Activated T-helper 1 cell treated with anti-CD3 and anti-CD28 coated beads, Interleukin-12 subunit alpha, Interleukin-12 subunit beta, Interleukin-2, Interleukin-4 antibody, amounts not matched to agents 30 ng/mL and 10 ng/mL and 1 ng/mL, durations not matched to agents 14 hours and 24 hours and 36 hours (primary cell): ENCODE measurements at regions of chr20 and their contacts with region 1.

Region 1: GRCh38 chr20:62793912-62794724 is 2.2 kb upstream of the MRGBP start:
- DNase-seq: peak; percentile 96
- H3K4me3 Mint-ChIP-seq: peak overlapping the region; percentile 81
- H3K27ac Mint-ChIP-seq: peak overlapping the region; percentile 91
- H3K4me1 Mint-ChIP-seq: peaks cover 15% of the 10 kb centered on the region
- H3K27me3 Mint-ChIP-seq: peaks cover 9% of the 10 kb centered on the region

Region 2: GRCh38 chr20:62121776-62122631 is 672.1 kb before region 1 on chr20 and contains the start of gene LSM14B:
- intact Hi-C with region 1: loop called (anchors 2 kb)
- DNase-seq: peak; percentile 95
- H3K4me3 Mint-ChIP-seq: peak within 1 kb of the TSS; percentile 90
- H3K27ac Mint-ChIP-seq: peak within 1 kb of the TSS; percentile 94
- H3K4me1 Mint-ChIP-seq: peaks cover 32% of the 10 kb centered on the region
- H3K27me3 Mint-ChIP-seq: no peaks in the 10 kb centered on the region
- total RNA-seq, gene LSM14B: 39.6 and 43.2 TPM in 2 replicates

Region 3: GRCh38 chr20:62407221-62407992 is 386.7 kb before region 1 on chr20 and contains the start of gene CABLES2:
- intact Hi-C with region 1: loop called (anchors 2 kb)
- DNase-seq: peak; percentile 90
- H3K4me3 Mint-ChIP-seq: peak within 1 kb of the TSS; percentile 85
- H3K27ac Mint-ChIP-seq: peak within 1 kb of the TSS; percentile 87
- H3K4me1 Mint-ChIP-seq: peaks cover 10% of the 10 kb centered on the region
- H3K27me3 Mint-ChIP-seq: no peaks in the 10 kb centered on the region
- total RNA-seq, gene CABLES2: 12.9 and 15.7 TPM in 2 replicates

Region 4: GRCh38 chr20:62642040-62642665 is 152.0 kb before region 1 on chr20 and contains the start of gene SLCO4A1:
- intact Hi-C with region 1: loop called (anchors 1 kb)
- DNase-seq: peak; percentile 90
- H3K4me3 Mint-ChIP-seq: peak within 1 kb of the TSS; percentile 85
- H3K27ac Mint-ChIP-seq: peak within 1 kb of the TSS; percentile 78
- H3K4me1 Mint-ChIP-seq: peaks cover 16% of the 10 kb centered on the region
- H3K27me3 Mint-ChIP-seq: peaks cover 16% of the 10 kb centered on the region
- total RNA-seq, gene SLCO4A1: 47.6 and 49.8 TPM in 2 replicates

Region 5: GRCh38 chr20:62723351-62723750 is 70.8 kb before region 1 on chr20:
- intact Hi-C with region 1: loop called (anchors 5 kb)
- DNase-seq: no peak
- H3K4me3 Mint-ChIP-seq: no peak overlapping the region
- H3K27ac Mint-ChIP-seq: no peak overlapping the region
- H3K4me1 Mint-ChIP-seq: peaks cover 12% of the 10 kb centered on the region
- H3K27me3 Mint-ChIP-seq: peaks cover 33% of the 10 kb centered on the region

Region 6: DNA sequence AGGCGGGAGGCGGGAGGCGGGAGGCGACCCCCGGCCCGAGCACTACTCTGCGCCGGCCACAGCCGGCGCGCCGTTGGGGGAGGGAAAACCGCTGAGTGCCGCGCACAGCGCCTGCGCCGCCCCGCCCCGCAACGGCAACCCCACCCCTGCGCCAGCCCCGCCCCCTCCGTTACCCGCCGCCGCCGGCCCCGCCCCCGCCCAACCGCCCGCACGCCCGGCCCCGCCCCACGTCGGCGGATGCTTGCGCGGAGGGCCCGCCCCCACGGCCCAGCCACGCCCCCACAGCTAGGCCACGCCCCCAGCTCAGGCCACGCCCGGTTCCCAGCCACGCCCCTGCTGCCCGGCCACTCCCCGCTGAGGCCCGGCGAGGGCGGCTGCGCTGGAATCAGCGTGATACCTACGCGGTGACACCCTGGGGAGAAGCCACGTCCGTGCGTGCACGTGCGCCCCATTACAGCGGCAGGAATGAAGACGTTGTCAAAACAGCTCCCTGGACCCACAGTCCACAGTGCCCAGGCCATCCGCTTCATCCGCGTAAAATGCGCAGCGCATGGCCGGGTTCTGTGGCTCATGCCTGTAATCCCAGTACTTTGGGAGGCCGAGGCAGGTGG is 67.7 kb after region 1 on chr20 and contains the start of gene TCFL5:
- intact Hi-C with region 1: loop called (anchors 1 kb)
- DNase-seq: peak; percentile 91
- H3K4me3 Mint-ChIP-seq: peak within 1 kb of the TSS; percentile 68
- H3K27ac Mint-ChIP-seq: peak within 1 kb of the TSS; percentile 34
- H3K4me1 Mint-ChIP-seq: peaks cover 6% of the 10 kb centered on the region
- H3K27me3 Mint-ChIP-seq: peaks cover 27% of the 10 kb centered on the region
- total RNA-seq, gene TCFL5: 5.7 and 5.8 TPM in 2 replicates